HCT116 (cell line): ENCODE measurements at regions of chr5 and their contacts with region 1.

Region 1: DNA sequence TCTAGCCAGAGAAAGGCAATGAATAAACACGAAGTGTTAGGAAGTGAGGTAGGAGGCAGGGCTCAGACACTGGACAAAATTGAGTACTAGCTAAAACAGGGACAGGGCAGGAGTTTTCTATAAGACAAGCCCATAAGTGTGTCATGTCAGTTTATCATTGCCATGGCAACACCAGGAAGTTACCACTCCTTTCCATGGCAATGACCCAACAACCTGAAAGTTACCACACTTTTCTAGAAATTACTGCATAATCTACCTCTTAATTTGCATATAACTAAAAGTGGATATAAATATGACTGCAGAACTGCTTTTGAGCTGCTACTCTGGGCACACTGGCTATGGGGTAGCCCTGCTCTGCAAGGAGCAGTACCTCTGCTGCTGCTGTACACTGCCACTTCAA is 442.5 kb upstream of the COX7C start:
- DNase-seq: no peak
- ATAC-seq: no peak
- H3K4me3 ChIP-seq: no peak overlapping the region
- H3K27ac ChIP-seq: no peak overlapping the region
- H3K4me1 ChIP-seq: no peaks in the 10 kb centered on the region
- H3K27me3 ChIP-seq: no peaks in the 10 kb centered on the region
- CTCF ChIP-seq: no peak
- POLR2A ChIP-seq: no peak
- RAD21 ChIP-seq: no peak

Region 2: DNA sequence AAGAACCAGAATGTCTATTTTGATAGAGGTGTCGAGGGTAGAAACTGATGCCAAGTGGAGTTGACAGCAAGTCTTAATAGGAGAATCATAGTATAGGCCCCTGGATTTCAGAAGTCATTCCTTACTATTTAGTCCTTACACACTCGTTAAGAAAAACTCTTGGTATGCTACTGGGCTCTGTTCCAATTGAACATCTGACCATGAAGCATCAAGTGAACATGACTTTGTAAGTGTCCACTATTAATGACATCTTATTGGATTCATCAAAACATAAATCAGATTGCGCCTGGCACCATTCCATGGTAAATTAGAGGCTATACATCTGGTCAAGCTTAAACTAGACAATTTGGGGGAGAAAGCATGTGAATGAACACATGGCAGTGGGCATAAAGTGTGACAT is 734.1 kb before region 1 on chr5:
- CTCF ChIA-PET with region 1: no interaction called
- POLR2A ChIA-PET with region 1: no interaction called
- RAD21 ChIA-PET with region 1: no interaction called
- intact Hi-C with region 1: loop called (anchors 5 kb)
- DNase-seq: no peak
- ATAC-seq: no peak
- H3K4me3 ChIP-seq: no peak overlapping the region
- H3K27ac ChIP-seq: no peak overlapping the region
- H3K4me1 ChIP-seq: no peaks in the 10 kb centered on the region
- H3K27me3 ChIP-seq: no peaks in the 10 kb centered on the region
- CTCF ChIP-seq: no peak
- POLR2A ChIP-seq: no peak
- RAD21 ChIP-seq: no peak

Region 3: GRCh38 chr5:86155796-86156195 is 19.4 kb before region 1 on chr5:
- CTCF ChIA-PET with region 1: no interaction called
- POLR2A ChIA-PET with region 1: no interaction called
- RAD21 ChIA-PET with region 1: no interaction called
- intact Hi-C with region 1: no loop called
- DNase-seq: no peak
- ATAC-seq: no peak
- H3K4me3 ChIP-seq: no peak overlapping the region
- H3K27ac ChIP-seq: no peak overlapping the region
- H3K4me1 ChIP-seq: no peaks in the 10 kb centered on the region
- H3K27me3 ChIP-seq: no peaks in the 10 kb centered on the region
- CTCF ChIP-seq: no peak
- POLR2A ChIP-seq: no peak
- RAD21 ChIP-seq: no peak

Region 4: GRCh38 chr5:86232246-86232645 is 57.0 kb after region 1 on chr5:
- CTCF ChIA-PET with region 1: no interaction called
- POLR2A ChIA-PET with region 1: no interaction called
- RAD21 ChIA-PET with region 1: no interaction called
- intact Hi-C with region 1: loop called (anchors 5 kb)
- DNase-seq: no peak
- ATAC-seq: no peak
- H3K4me3 ChIP-seq: no peak overlapping the region
- H3K27ac ChIP-seq: no peak overlapping the region
- H3K4me1 ChIP-seq: no peaks in the 10 kb centered on the region
- H3K27me3 ChIP-seq: no peaks in the 10 kb centered on the region
- CTCF ChIP-seq: no peak
- POLR2A ChIP-seq: no peak
- RAD21 ChIP-seq: no peak